Mammary epithelial cell (primary cell): ENCODE measurements at regions of chr5 and their contacts with region 1.

Region 1: DNA sequence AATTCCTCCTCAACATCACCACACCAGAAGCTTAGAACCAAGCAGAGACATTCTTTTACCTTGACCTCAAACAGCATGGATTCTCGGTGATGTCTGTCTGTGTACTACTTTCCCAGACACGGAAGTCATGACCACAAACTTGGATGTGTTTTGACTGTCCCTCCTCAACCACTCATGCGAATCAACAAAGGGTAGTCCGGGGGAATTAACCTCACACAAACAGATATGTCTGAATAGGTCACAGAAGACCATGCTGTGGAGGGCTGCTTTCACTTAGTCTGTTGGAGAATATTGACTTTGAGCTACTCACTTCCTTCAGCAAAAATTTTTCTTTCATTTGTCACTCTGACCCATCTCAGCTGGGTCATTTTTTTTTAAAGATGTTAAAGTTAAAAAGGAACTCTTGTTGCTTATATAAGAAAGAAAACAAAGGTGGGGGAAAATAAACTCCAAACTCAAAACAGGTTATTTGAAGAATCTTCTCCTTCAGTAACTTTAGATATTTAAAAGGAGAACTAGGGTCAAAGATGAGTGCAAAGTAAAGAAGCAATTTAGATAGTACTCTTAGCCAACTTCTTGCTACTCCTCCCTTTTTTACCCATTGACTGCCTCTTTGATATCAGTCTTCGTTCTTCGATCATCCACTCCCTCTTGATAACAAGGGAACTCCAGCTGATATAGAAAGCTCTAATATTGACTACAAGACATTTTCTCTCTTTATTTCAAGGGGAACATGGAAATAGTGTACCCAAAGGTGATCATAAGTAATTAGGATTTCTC is 343.4 kb upstream of the CDH6 start:
- DNase-seq: no peak
- H3K4me3 ChIP-seq: no peak overlapping the region
- H3K27ac ChIP-seq: no peak overlapping the region
- H3K4me1 ChIP-seq: no peaks in the 10 kb centered on the region
- H3K27me3 ChIP-seq: no peaks in the 10 kb centered on the region
- CTCF ChIP-seq: no peak

Region 2: DNA sequence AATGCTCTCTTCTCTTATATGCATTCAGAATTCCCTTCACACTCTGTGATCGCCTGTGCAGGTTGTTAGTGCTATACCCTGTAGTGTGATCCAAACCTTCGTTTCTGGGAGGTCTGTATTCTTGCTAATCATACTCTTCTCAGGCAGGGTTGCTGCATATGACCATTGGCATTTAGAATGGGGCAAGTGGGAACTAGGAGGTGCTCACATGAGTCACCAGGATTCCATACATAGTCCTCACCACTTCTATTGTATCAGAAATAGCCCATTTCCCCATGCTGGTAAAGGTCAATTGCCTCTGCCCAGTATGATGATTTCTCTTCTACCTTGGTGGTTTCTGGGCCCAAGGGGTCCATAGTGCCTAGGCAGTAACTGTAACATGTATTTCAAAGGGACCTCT is 100.2 kb before region 1 on chr5:
- CTCF ChIA-PET with region 1: no interaction called
- dilution Hi-C with region 1: loop called (anchors 10 kb)
- in situ Hi-C with region 1: no loop called
- intact Hi-C with region 1: no loop called
- DNase-seq: no peak
- H3K4me3 ChIP-seq: no peak overlapping the region
- H3K27ac ChIP-seq: no peak overlapping the region
- H3K4me1 ChIP-seq: no peaks in the 10 kb centered on the region
- H3K27me3 ChIP-seq: no peaks in the 10 kb centered on the region
- CTCF ChIP-seq: no peak